GM12878 (cell line): ENCODE measurements at regions of chr19 and their contacts with region 1.

Region 1: DNA sequence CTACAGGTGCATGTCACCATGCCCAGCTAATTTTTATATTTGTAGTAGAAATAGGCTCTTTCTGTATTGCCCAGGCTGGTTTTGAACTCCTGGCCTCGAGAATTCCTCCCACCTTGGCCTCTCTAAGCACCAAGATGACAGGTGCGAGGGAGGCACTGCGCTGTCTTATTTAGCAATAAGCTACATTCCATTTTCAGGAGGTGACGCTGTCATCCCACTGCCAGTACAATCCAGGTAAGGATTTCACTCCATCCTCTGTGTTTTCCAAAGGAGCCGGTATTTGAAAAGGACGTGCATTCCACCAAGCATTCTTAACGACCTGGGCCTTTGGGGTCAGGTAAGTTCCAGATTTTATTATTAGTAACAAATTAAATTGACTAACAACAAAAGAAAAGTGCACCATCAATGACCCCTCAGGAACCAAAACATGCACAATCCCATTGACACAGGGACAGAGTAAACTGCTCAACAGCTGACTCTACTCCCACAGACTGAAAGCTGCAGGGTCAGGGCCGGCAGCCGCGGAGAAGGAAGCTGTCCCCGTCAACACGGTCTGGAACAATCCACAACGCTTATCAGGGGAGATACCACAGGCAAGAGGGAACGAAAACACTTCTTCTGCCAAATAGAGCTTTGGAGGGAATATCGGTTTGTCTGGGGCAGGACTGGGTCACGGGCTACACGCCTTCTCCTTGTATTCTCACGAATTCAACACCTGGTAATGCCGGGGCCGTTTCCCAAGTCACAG is 82.8 kb downstream of the INSR start:
- DNase-seq: no peak
- ATAC-seq: no peak
- H3K4me3 ChIP-seq: no peak overlapping the region
- H3K27ac ChIP-seq: no peak overlapping the region
- H3K4me1 ChIP-seq: peaks cover 55% of the 10 kb centered on the region
- H3K27me3 ChIP-seq: no peaks in the 10 kb centered on the region
- CTCF ChIP-seq: no peak
- EP300 ChIP-seq: no peak
- POLR2A ChIP-seq: no peak
- RAD21 ChIP-seq: no peak

Region 2: DNA sequence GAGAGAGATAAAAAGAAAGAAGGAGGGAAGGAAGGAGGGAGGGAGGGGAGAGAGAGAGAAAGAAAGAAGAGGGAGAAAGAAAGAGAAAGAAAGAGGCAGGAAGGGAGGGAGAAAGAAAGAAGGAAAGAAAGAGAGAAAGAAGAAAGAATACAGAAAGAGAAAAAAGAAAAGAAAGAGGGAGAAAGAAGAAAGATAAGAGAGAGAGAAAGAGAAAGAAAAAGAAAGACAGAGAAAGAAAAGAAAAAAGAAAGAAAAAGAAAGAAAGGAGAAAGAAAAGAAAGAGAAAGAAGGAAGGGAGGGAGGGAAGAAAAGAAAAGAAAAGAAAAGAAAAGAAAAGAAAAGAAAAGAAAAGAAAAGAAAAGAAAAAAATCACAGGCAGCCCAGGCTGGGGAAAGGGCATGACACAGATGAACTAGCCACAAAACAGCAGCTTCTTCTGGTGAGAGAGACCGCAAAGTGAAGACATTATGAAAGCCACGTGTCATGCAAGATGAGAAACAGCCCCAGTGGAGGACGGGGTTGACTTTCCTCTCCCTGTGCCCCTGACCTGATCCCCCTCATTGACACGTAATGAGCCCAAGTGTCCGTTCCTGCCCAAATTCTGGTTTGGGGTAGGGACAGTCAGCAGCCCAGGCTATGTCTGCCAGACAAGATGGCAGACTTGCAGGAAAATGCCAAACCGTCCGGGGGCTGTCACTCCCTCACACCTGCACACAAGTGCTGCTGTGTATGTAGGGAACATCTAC is 19.3 kb before region 1 on chr19:
- CTCF ChIA-PET with region 1: interaction called, 6 read pairs
- POLR2A ChIA-PET with region 1: interaction called, 12 read pairs
- RAD21 ChIA-PET with region 1: interaction called, 5 read pairs
- SMC1A ChIA-PET with region 1: interaction called, 5 read pairs
- in situ Hi-C with region 1: no loop called
- intact Hi-C with region 1: no loop called
- DNase-seq: no peak
- ATAC-seq: peak; percentile 83
- H3K4me3 ChIP-seq: 0 out of 2 replicates have a peak overlapping the region, but pooled peaks have one; percentile 37
- H3K27ac ChIP-seq: peak overlapping the region; percentile 74
- H3K4me1 ChIP-seq: peaks cover 39% of the 10 kb centered on the region
- H3K27me3 ChIP-seq: no peaks in the 10 kb centered on the region
- CTCF ChIP-seq: no peak
- EP300 ChIP-seq: peak; percentile 70 to 71; a peak in 3 of 4 replicates
- POLR2A ChIP-seq: peak; percentile 45; the same call in 1 of the 2 replicates
- RAD21 ChIP-seq: no peak